ENCODE measurements at regions of chr14 and their contacts with region 1.

Region 1: DNA sequence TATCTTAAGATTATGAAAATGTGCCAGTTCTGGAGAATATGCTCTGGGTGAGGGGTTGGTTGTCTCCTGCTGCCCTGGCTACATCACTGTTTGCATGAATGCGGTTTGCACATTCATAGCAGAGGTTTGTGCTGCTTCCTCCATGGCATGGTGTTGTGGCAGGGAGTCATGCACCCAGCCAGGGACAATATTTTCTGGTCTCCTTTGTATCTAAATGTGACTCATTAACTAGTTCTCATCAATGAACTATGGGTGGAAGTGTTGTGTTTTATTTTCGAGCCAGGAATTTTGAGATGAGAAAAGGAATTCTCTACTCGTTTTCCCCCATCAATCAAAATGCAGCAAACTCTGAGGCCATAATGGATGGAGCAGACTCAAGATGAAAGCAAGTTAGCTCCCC is 527.3 kb downstream of the SNAPC1 start:
- DNase-seq: peak; percentile 55
- H3K4me3 ChIP-seq: no peak overlapping the region
- H3K27ac ChIP-seq: no peak overlapping the region
- H3K4me1 ChIP-seq: no peaks in the 10 kb centered on the region
- H3K27me3 ChIP-seq: no peaks in the 10 kb centered on the region
- CTCF ChIP-seq: no peak

Region 2: GRCh38 chr14:62162998-62163589 is 126.4 kb before region 1 on chr14:
- CTCF ChIA-PET with region 1: no interaction called
- dilution Hi-C with region 1: no loop called
- in situ Hi-C with region 1: no loop called
- intact Hi-C with region 1: no loop called
- DNase-seq: peak; percentile 19
- H3K4me3 ChIP-seq: no peak overlapping the region
- H3K27ac ChIP-seq: no peak overlapping the region
- H3K4me1 ChIP-seq: no peaks in the 10 kb centered on the region
- H3K27me3 ChIP-seq: peaks cover 2% of the 10 kb centered on the region
- CTCF ChIP-seq: peak; percentile 87

Region 3: DNA sequence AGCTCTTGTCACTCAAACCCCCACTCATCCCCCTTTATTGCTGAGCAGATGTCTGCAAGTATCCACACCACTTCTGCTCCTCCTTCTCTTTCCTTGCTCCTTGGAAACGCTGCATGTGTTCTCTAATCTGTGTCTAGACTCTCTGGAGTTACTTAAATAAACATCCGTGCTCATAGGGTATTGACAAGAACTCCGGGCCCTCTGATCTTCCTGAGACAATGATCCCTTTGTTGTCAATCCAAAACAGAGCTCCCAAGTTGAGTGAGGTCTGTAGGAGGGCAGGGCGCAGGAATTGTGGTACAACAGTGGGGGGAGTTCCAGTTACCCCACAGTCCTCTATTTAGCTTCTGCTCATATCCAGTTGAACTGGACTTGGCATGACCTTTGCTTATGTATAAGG is 38.2 kb before region 1 on chr14:
- CTCF ChIA-PET with region 1: no interaction called
- dilution Hi-C with region 1: loop called (anchors 5 kb)
- in situ Hi-C with region 1: no loop called
- intact Hi-C with region 1: no loop called
- DNase-seq: no peak
- H3K4me3 ChIP-seq: no peak overlapping the region
- H3K27ac ChIP-seq: no peak overlapping the region
- H3K4me1 ChIP-seq: no peaks in the 10 kb centered on the region
- H3K27me3 ChIP-seq: no peaks in the 10 kb centered on the region
- CTCF ChIP-seq: no peak